ENCODE measurements at regions of chr10 and their contacts with region 1.

Region 1: GRCh38 chr10:73886085-73886529 is 11.8 kb upstream of the CAMK2G start:
- DNase-seq: peak; percentile 83
- ATAC-seq: peak; percentile 98
- H3K4me3 ChIP-seq: no peak overlapping the region
- H3K4me3 Mint-ChIP-seq: no peak overlapping the region
- H3K27ac ChIP-seq: no peak overlapping the region
- H3K27ac Mint-ChIP-seq: no peak overlapping the region
- H3K4me1 ChIP-seq: peaks cover 4 to 19% of the 10 kb centered on the region in 2 donors
- H3K4me1 Mint-ChIP-seq: peaks cover 9% of the 10 kb centered on the region
- H3K27me3 ChIP-seq: no peaks in the 10 kb centered on the region
- H3K27me3 Mint-ChIP-seq: no peaks in the 10 kb centered on the region
- CTCF ChIP-seq: peak; percentile 85

Region 2: DNA sequence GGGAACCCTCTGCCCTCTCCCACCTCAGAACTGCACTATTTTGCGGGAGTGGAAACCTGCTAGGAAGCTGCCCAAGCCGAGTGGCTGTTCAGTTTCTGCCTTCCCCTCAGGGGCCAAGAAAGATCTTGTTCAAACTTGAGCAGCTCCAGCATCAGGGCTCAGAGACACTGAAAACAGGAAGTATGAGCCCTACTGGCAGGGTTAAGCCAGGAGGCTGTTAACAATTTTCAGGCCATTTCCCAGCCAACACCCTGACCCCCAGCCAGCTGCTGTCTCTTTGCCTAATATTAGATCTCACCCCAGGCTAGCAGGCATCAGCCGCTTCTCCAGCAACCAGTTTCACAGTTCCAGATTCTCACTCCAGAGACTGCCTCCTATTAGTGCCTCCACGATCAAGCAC is 34.0 kb after region 1 on chr10:
- CTCF ChIA-PET with region 1: interaction called, 14 read pairs
- POLR2A ChIA-PET with region 1: no interaction called
- intact Hi-C with region 1: no loop called
- DNase-seq: peak; percentile 62
- ATAC-seq: peak; percentile 85
- H3K4me3 ChIP-seq: no peak overlapping the region
- H3K4me3 Mint-ChIP-seq: no peak overlapping the region
- H3K27ac ChIP-seq: peak overlapping the region; percentile 1 to 36
- H3K27ac Mint-ChIP-seq: peak overlapping the region; percentile 90
- H3K4me1 ChIP-seq: peaks cover 7 to 13% of the 10 kb centered on the region in 2 donors
- H3K4me1 Mint-ChIP-seq: peaks cover 10% of the 10 kb centered on the region
- H3K27me3 ChIP-seq: no peaks in the 10 kb centered on the region
- H3K27me3 Mint-ChIP-seq: no peaks in the 10 kb centered on the region
- CTCF ChIP-seq: no peak

Region 3: GRCh38 chr10:73997787-73998622 is 111.9 kb after region 1 on chr10 and contains the start of gene VCL:
- CTCF ChIA-PET with region 1: interaction called, 8 read pairs
- POLR2A ChIA-PET with region 1: no interaction called
- intact Hi-C with region 1: loop called (anchors 5 kb)
- DNase-seq: peak; percentile 97
- ATAC-seq: peak; percentile 97
- H3K4me3 ChIP-seq: peak within 1 kb of the TSS; percentile 77 to 96 (median 93)
- H3K4me3 Mint-ChIP-seq: peak within 1 kb of the TSS; percentile 99
- H3K27ac ChIP-seq: peak within 1 kb of the TSS; percentile 61 to 89
- H3K27ac Mint-ChIP-seq: peak within 1 kb of the TSS; percentile 96
- H3K4me1 ChIP-seq: peaks cover 20 to 26% of the 10 kb centered on the region in 2 donors
- H3K4me1 Mint-ChIP-seq: peaks cover 45% of the 10 kb centered on the region
- H3K27me3 ChIP-seq: no peaks in the 10 kb centered on the region
- H3K27me3 Mint-ChIP-seq: no peaks in the 10 kb centered on the region
- CTCF ChIP-seq: no peak
- total RNA-seq, gene VCL: 29.8 and 37.0 TPM in 2 replicates

Region 4: GRCh38 chr10:74081192-74081803 is 195.2 kb after region 1 on chr10:
- CTCF ChIA-PET with region 1: interaction called, 219 read pairs
- POLR2A ChIA-PET with region 1: interaction called, 3 read pairs
- intact Hi-C with region 1: loop called (anchors 1 kb)
- DNase-seq: peak; percentile 66
- ATAC-seq: peak; percentile 50
- H3K4me3 ChIP-seq: no peak overlapping the region
- H3K4me3 Mint-ChIP-seq: no peak overlapping the region
- H3K27ac ChIP-seq: no peak overlapping the region
- H3K27ac Mint-ChIP-seq: no peak overlapping the region
- H3K4me1 ChIP-seq: peaks cover 18 to 20% of the 10 kb centered on the region in 2 donors
- H3K4me1 Mint-ChIP-seq: peaks cover 37% of the 10 kb centered on the region
- H3K27me3 ChIP-seq: no peaks in the 10 kb centered on the region
- H3K27me3 Mint-ChIP-seq: no peaks in the 10 kb centered on the region
- CTCF ChIP-seq: peak; percentile 71

Region 5: DNA sequence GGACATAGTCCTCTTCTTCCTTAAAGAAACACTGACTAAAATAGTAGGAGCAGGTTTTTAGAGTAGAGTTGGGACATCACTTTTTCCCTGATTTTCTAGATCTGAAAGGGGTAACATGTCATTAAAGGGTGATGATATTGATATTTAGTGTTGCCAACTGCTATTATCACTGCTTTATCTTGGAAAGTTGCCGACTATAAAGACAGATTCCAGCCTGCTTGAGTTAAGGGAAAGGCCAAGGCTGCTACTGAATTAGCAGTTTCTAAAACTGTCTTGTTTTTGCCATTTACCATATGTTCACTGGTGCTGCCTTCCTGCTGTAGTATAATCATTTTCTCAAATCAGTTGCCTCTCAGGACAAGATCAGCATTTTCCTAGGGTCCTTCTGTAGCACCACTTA is 234.8 kb after region 1 on chr10:
- CTCF ChIA-PET with region 1: interaction called, 10 read pairs
- POLR2A ChIA-PET with region 1: no interaction called
- intact Hi-C with region 1: no loop called
- DNase-seq: no peak
- ATAC-seq: no peak
- H3K4me3 ChIP-seq: no peak overlapping the region
- H3K4me3 Mint-ChIP-seq: no peak overlapping the region
- H3K27ac ChIP-seq: no peak overlapping the region
- H3K27ac Mint-ChIP-seq: peak overlapping the region; percentile 16
- H3K4me1 ChIP-seq: no peaks in the 10 kb centered on the region
- H3K4me1 Mint-ChIP-seq: no peaks in the 10 kb centered on the region
- H3K27me3 ChIP-seq: no peaks in the 10 kb centered on the region
- H3K27me3 Mint-ChIP-seq: no peaks in the 10 kb centered on the region
- CTCF ChIP-seq: no peak

Region 6: GRCh38 chr10:74244097-74244685 is 358.1 kb after region 1 on chr10:
- CTCF ChIA-PET with region 1: interaction called, 5 read pairs
- POLR2A ChIA-PET with region 1: interaction called, 11 read pairs
- intact Hi-C with region 1: no loop called
- DNase-seq: peak; percentile 51
- ATAC-seq: no peak
- H3K4me3 ChIP-seq: no peak overlapping the region
- H3K4me3 Mint-ChIP-seq: no peak overlapping the region
- H3K27ac ChIP-seq: no peak overlapping the region
- H3K27ac Mint-ChIP-seq: no peak overlapping the region
- H3K4me1 ChIP-seq: no peaks in the 10 kb centered on the region
- H3K4me1 Mint-ChIP-seq: peaks cover 4% of the 10 kb centered on the region
- H3K27me3 ChIP-seq: no peaks in the 10 kb centered on the region
- H3K27me3 Mint-ChIP-seq: no peaks in the 10 kb centered on the region
- CTCF ChIP-seq: peak; percentile 78

Region 7: GRCh38 chr10:75294866-75295701 is 1409.0 kb after region 1 on chr10:
- CTCF ChIA-PET with region 1: no interaction called
- POLR2A ChIA-PET with region 1: no interaction called
- intact Hi-C with region 1: no loop called
- DNase-seq: peak; percentile 61
- ATAC-seq: peak; percentile 68
- H3K4me3 ChIP-seq: peak overlapping the region; percentile 47 to 66 (median 66)
- H3K4me3 Mint-ChIP-seq: peak overlapping the region; percentile 85
- H3K27ac ChIP-seq: peak overlapping the region in 1 of 2 donors; percentile 36
- H3K27ac Mint-ChIP-seq: no peak overlapping the region
- H3K4me1 ChIP-seq: peaks cover 16 to 18% of the 10 kb centered on the region in 2 donors
- H3K4me1 Mint-ChIP-seq: peaks cover 6% of the 10 kb centered on the region
- H3K27me3 ChIP-seq: peaks cover 0 to 41% (median 20%) of the 10 kb centered on the region in 4 experiments
- H3K27me3 Mint-ChIP-seq: peaks cover 33% of the 10 kb centered on the region
- CTCF ChIP-seq: peak; percentile 16

Measured in B cell (primary cell).